ENCODE measurements at regions of chrX and their contacts with region 1.

Region 1: DNA sequence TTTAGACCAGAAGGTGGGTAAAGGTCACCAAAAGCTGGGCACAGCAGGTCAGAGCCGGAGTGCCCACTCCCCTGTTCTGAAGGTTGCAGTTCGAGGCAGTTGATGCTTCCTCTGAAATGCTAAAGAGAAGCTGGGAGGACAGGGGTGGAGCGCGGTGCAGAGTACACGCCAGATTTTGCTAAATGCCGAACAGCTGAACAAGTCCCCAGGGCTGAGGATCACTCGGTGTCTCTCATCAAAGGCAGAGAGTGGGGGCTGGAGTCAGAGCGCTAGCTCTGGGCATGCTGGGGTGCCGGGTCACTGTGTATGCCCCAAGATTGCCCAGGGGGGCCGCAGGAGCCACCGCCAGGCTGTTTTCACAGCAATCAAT is 197.0 kb downstream of the BCOR start:
- DNase-seq: no peak
- H3K4me3 Mint-ChIP-seq: no peak overlapping the region
- H3K27ac Mint-ChIP-seq: no peak overlapping the region
- H3K4me1 Mint-ChIP-seq: peaks cover 14% of the 10 kb centered on the region
- H3K27me3 Mint-ChIP-seq: peaks cover 2% of the 10 kb centered on the region

Region 2: GRCh38 chrX:39869846-39870601 is 30.8 kb before region 1 on chrX:
- intact Hi-C with region 1: no loop called
- DNase-seq: peak; percentile 70
- H3K4me3 Mint-ChIP-seq: peak overlapping the region; percentile 43
- H3K27ac Mint-ChIP-seq: peak overlapping the region; percentile 83
- H3K4me1 Mint-ChIP-seq: peaks cover 55% of the 10 kb centered on the region
- H3K27me3 Mint-ChIP-seq: no peaks in the 10 kb centered on the region

Region 3: GRCh38 chrX:39883666-39884065 is 17.1 kb before region 1 on chrX:
- intact Hi-C with region 1: loop called (anchors 1 kb)
- DNase-seq: peak; percentile 12
- H3K4me3 Mint-ChIP-seq: peak overlapping the region; percentile 58
- H3K27ac Mint-ChIP-seq: peak overlapping the region; percentile 88
- H3K4me1 Mint-ChIP-seq: peaks cover 28% of the 10 kb centered on the region
- H3K27me3 Mint-ChIP-seq: peaks cover 9% of the 10 kb centered on the region

Region 4: DNA sequence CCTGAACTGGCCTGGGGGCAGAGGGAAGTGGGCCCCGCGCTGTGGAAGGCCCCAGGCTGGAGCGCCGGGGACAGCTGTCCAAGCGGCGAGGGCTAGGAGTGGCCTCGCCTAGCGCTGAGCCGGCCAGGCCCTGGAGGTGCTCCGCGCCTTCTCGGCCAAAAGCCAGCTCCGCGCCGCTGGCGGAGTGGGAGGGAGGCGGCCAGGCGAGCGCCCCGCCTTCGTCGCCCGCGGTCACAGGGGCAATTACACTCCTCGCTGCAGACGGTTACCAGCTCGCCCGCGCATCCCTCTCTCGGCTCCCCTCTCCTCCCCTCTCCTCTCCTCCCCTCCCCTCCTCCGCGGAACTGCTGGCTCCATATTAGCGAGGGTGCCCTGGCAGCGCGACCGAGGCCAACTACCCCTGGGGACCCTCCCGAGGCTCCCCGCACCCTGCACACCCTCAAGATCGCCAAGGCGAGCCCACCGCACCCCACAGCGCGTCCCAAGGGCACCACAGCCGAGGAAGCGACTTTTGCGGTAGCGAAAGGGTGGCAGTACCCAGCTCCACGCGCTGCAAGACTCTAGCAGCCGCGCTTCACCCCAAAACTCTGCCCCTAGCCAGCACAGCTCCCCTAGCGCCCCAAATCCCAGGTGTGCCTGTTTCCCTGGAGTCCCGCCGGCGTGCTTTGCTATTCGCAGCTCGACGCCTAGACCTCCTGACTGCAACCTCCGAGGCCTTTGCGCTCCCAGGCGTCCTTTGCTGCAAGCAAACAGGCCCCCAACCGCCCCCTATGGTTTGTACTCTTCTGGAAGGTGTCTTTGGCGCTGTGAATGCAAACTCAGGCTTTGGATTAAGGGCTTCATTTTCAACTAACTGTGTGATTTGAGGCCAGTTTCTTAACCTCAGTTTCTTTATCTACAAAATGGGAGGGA is 105.6 kb after region 1 on chrX:
- intact Hi-C with region 1: loop called (anchors 5 kb)
- DNase-seq: peak; percentile 10
- H3K4me3 Mint-ChIP-seq: peak overlapping the region; percentile 30
- H3K27ac Mint-ChIP-seq: no peak overlapping the region
- H3K4me1 Mint-ChIP-seq: peaks cover 13% of the 10 kb centered on the region
- H3K27me3 Mint-ChIP-seq: peaks cover 23% of the 10 kb centered on the region